K562 (cell line): ENCODE measurements at regions of chr2 and their contacts with region 1.

Region 1: GRCh38 chr2:127064642-127065250 is 42.2 kb downstream of the BIN1 start:
- DNase-seq: peak; percentile 94 to 97 (median 96)
- ATAC-seq: peak; percentile 95
- H3K4me3 ChIP-seq: no peak overlapping the region
- H3K27ac ChIP-seq: peak overlapping the region; percentile 91
- H3K4me1 ChIP-seq: peaks cover 19 to 52% of the 10 kb centered on the region in 2 experiments
- H3K27me3 ChIP-seq: no peaks in the 10 kb centered on the region
- CTCF ChIP-seq: peak in 1 of 3 experiments; percentile 6; a peak in 1 of 6 replicates
- EP300 ChIP-seq: peak; percentile 78
- POLR2A ChIP-seq: peak; percentile 82
- RAD21 ChIP-seq: 0 out of 4 replicates have a peak, but pooled peaks of 1 of the 2 experiments have one; percentile 6

Region 2: DNA sequence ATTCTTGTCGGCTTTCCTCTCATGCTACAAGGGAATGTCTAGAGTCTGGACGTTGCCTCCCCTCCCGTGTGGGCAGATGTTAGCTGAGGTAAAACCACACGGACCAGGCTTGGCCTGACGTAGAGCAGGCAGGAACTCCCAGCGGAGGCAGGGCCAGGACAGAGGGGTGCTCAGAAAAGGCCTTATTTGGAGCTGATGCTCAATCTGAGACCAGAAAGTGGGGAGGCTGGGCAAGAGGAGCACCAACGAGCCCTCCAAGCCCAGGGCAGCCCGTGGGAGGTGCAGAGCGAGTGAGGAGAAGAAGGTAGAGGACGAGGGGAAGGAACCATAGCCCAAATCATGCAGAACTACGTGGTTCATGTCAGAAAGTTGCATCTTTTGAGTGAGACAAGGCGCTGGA is 157.1 kb before region 1 on chr2:
- CTCF ChIA-PET with region 1: no interaction called
- POLR2A ChIA-PET with region 1: no interaction called
- in situ Hi-C with region 1: no loop called
- intact Hi-C with region 1: no loop called
- DNase-seq: no peak
- ATAC-seq: no peak
- H3K4me3 ChIP-seq: no peak overlapping the region
- H3K27ac ChIP-seq: no peak overlapping the region
- H3K4me1 ChIP-seq: no peaks in the 10 kb centered on the region
- H3K27me3 ChIP-seq: peaks cover 7 to 30% of the 10 kb centered on the region in 2 experiments; a peak in 3 of 5 replicates
- CTCF ChIP-seq: no peak
- EP300 ChIP-seq: no peak
- POLR2A ChIP-seq: no peak
- RAD21 ChIP-seq: no peak

Region 3: GRCh38 chr2:127078666-127079270 is 14.0 kb after region 1 on chr2:
- CTCF ChIA-PET with region 1: no interaction called
- POLR2A ChIA-PET with region 1: interaction called, 11 read pairs
- in situ Hi-C with region 1: no loop called
- intact Hi-C with region 1: no loop called
- DNase-seq: no peak
- ATAC-seq: 0 out of 3 replicates have a peak, but pooled peaks have one; percentile 11
- H3K4me3 ChIP-seq: no peak overlapping the region
- H3K27ac ChIP-seq: no peak overlapping the region
- H3K4me1 ChIP-seq: peaks cover 9 to 44% of the 10 kb centered on the region in 2 experiments; a peak in 4 of 5 replicates
- H3K27me3 ChIP-seq: peaks cover 1 to 15% of the 10 kb centered on the region in 2 experiments; a peak in 3 of 5 replicates
- CTCF ChIP-seq: no peak
- EP300 ChIP-seq: no peak
- POLR2A ChIP-seq: no peak
- RAD21 ChIP-seq: no peak

Region 4: DNA sequence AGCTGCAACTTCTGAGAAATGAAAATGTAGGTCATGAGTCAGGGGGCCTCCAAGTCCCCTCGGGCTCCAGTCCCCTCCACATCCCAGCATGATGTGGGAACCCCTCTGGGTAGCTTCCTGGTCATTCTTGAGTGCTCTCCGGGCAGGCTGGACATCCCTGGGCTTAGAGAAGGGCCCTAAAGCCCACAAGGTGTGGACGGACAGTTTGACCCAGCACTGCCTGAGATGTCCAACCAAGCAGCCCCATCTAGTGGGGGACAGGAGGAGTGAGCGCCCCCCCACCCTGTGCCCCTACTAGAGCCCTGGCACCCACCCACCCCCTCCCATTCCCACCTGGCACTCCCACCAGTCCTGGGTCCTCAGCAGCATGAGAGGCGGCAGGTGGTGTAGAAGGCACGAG is 109.4 kb after region 1 on chr2:
- CTCF ChIA-PET with region 1: no interaction called
- POLR2A ChIA-PET with region 1: no interaction called
- in situ Hi-C with region 1: no loop called
- intact Hi-C with region 1: loop called (anchors 5 kb)
- DNase-seq: peak in 2 of 4 experiments; percentile 34 to 57
- ATAC-seq: peak; percentile 81
- H3K4me3 ChIP-seq: no peak overlapping the region
- H3K27ac ChIP-seq: no peak overlapping the region
- H3K4me1 ChIP-seq: no peaks in the 10 kb centered on the region
- H3K27me3 ChIP-seq: peaks cover 36 to 57% of the 10 kb centered on the region in 2 experiments
- CTCF ChIP-seq: peak in 2 of 3 experiments; percentile 33 to 45; a peak in 2 of 6 replicates
- EP300 ChIP-seq: no peak
- POLR2A ChIP-seq: no peak
- RAD21 ChIP-seq: peak in 1 of 2 experiments; percentile 44; a peak in 2 of 4 replicates

Region 5: DNA sequence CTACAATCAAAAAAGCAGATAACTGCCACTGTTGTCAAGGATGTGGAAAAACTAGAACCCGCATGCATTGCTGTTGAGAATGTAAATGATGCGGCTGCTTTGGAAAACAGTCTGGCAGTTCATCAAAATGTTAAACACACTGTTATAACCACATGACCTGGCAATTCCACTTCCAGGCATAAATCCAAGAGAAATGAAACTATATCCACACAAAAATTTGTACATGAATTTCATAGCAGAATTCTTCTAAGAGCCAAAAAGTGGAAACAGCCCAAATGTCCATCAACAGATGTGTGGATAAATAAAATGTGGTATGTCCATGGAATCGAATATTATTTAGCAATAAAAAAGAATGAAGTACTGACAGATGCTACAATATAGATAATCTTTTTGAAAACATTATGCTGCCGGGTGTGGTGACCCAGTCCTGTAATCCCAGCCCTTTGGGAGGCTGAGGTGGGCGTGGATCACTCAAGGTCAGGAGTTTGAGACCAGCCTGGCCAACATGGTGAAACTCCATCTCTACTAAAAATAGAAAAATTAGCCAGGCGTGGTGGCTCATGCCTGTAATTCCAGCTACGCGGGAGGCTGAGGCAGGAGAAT is 197.2 kb after region 1 on chr2:
- CTCF ChIA-PET with region 1: no interaction called
- POLR2A ChIA-PET with region 1: no interaction called
- in situ Hi-C with region 1: no loop called
- intact Hi-C with region 1: no loop called
- DNase-seq: no peak
- ATAC-seq: no peak
- H3K4me3 ChIP-seq: no peak overlapping the region
- H3K27ac ChIP-seq: no peak overlapping the region
- H3K4me1 ChIP-seq: no peaks in the 10 kb centered on the region
- H3K27me3 ChIP-seq: no peaks in the 10 kb centered on the region
- CTCF ChIP-seq: no peak
- EP300 ChIP-seq: no peak
- POLR2A ChIP-seq: no peak
- RAD21 ChIP-seq: no peak